K562 (cell line): ENCODE measurements at regions of chr11 and their contacts with region 1.

Region 1: GRCh38 chr11:114412946-114413345 is 12.5 kb downstream of the RBM7 start:
- DNase-seq: no peak
- ATAC-seq: no peak; the same call in 2 of the 3 replicates
- H3K4me3 ChIP-seq: no peak overlapping the region
- H3K27ac ChIP-seq: no peak overlapping the region
- H3K4me1 ChIP-seq: no peaks in the 10 kb centered on the region
- H3K27me3 ChIP-seq: no peaks in the 10 kb centered on the region
- CTCF ChIP-seq: no peak
- EP300 ChIP-seq: no peak
- POLR2A ChIP-seq: no peak
- RAD21 ChIP-seq: no peak

Region 2: DNA sequence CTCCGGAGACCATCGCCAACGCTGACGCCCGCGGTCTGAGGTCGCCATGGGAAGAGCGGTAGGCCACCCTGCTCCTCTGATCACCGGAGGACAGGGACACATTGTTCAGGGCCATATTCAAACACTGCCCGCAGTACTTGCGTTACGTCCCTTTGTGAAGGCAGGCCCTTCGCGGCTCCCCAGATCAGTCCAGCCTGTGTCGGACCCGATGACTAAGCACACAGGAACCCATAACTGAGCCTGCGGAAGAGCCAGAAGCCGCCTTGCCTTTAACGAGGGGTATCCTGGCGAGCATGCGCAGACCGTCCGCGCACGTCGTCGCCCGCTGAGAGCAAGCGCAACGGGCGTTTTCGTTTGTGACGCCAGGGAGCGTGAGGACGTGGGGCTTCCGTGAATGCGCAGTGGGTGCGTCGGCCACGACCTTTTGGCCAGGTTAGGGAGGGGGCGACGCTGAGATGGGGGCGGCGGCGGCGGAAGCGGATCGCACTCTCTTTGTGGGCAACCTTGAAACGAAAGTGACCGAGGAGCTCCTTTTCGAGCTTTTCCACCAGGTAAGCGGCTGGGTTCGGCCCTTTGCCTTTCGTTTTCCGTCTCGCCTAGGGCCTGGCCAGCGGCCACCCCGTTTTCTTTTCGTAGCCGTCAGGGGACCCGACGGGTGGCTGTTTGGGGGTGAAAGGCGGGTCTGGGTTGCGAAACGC is 12.6 kb before region 1 on chr11 and contains the starts of genes C11orf71 and RBM7:
- CTCF ChIA-PET with region 1: interaction called, 3 read pairs
- POLR2A ChIA-PET with region 1: interaction called, 12 read pairs
- in situ Hi-C with region 1: no loop called
- intact Hi-C with region 1: no loop called
- DNase-seq: peak; percentile 90 to 99 (median 92)
- ATAC-seq: peak; percentile 90
- H3K4me3 ChIP-seq: peak within 1 kb of the TSS; percentile 54
- H3K27ac ChIP-seq: peak within 1 kb of the TSS; percentile 99
- H3K4me1 ChIP-seq: peaks cover 3 to 25% of the 10 kb centered on the region in 2 experiments
- H3K27me3 ChIP-seq: no peaks in the 10 kb centered on the region
- CTCF ChIP-seq: peak in 1 of 3 experiments; percentile 18; a peak in 1 of 6 replicates
- EP300 ChIP-seq: peak; percentile 28; the same call in 1 of the 2 replicates
- POLR2A ChIP-seq: peak; percentile 98
- RAD21 ChIP-seq: no peak
- polyA plus RNA-seq, gene C11orf71: 2.9 to 4.3 TPM
- polyA plus RNA-seq, gene RBM7: 62.7 to 76.8 TPM

Region 3: GRCh38 chr11:114522818-114523217 is 109.9 kb after region 1 on chr11:
- CTCF ChIA-PET with region 1: no interaction called
- POLR2A ChIA-PET with region 1: no interaction called
- in situ Hi-C with region 1: no loop called
- intact Hi-C with region 1: no loop called
- DNase-seq: no peak
- ATAC-seq: no peak
- H3K4me3 ChIP-seq: no peak overlapping the region
- H3K27ac ChIP-seq: no peak overlapping the region
- H3K4me1 ChIP-seq: no peaks in the 10 kb centered on the region
- H3K27me3 ChIP-seq: no peaks in the 10 kb centered on the region
- CTCF ChIP-seq: no peak
- EP300 ChIP-seq: no peak
- POLR2A ChIP-seq: no peak
- RAD21 ChIP-seq: no peak